Cardiac septum (tissue), 1 donor: ENCODE measurements at regions of chr2 and their contacts with region 1.

Region 1: GRCh38 chr2:25606892-25607291 is 66.5 kb downstream of the DTNB start:
- DNase-seq: no peak

Region 2: DNA sequence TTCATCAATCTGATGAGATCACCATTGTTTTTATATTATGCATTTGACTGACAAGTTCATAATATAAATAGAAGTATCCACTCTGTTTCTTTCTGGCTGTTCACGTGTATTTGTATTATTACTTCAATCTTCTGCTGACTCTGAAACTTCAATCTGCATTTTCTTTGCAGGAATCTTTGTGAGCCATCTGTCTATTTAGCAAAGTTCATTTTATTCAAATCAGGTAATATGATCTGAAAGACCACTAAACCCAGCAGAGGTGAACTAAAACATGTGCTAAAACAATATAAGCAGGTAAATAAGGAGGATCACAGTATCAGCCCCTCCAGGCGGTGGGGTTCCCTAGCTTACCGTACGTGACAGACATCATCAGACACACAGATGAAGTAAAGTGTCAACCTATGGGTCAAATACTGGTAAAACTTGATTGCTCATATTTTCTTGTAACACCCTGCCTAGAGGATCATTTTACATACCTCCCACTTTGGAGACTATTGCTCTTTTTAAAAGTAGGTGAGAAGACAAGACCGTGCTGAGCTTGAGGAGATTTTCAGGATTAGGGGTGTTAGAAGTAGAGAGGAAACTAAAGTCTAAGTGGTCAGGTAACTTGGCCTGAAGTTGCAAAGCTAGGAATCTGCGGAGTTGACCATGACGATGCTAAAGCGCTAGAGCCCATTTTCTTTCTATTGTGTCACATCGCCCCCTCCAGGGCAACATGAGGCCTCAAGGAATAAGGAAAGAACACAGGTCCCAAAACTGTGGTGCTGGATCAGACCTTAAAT is 57.5 kb after region 1 on chr2:
- intact Hi-C with region 1: loop called (anchors 2 kb)
- DNase-seq: no peak

Region 3: GRCh38 chr2:25700221-25700660 is 93.3 kb after region 1 on chr2:
- intact Hi-C with region 1: loop called (anchors 5 kb)
- DNase-seq: no peak